ENCODE measurements at regions of chr4 and their contacts with region 1.

Region 1: DNA sequence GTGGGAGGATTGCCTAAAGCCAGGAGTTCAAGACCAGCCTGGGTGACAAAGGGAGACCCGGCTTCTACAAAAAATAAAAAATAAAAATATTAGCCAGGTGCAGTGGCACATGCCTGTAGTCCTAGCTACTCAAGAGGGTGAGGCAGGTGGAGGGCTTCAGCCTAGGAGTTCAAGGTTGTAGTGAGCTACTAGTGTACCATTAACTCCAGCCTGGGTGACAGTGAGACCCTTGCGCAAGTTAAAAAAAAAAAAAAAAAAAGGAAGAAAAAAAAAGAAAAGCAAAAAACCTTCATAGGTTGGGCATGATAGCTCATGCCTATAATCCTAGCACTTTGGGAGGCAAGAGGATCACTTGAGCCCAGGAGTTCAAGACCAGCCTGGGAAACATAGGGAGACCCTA is 5.8 kb downstream of the SCLT1 start:
- DNase-seq: no peak
- ATAC-seq: 0 out of 3 replicates have a peak, but pooled peaks have one; percentile 5
- H3K4me3 ChIP-seq: no peak overlapping the region
- H3K27ac ChIP-seq: no peak overlapping the region
- H3K4me1 ChIP-seq: no peaks in the 10 kb centered on the region
- H3K27me3 ChIP-seq: no peaks in the 10 kb centered on the region
- CTCF ChIP-seq: no peak
- EP300 ChIP-seq: no peak
- POLR2A ChIP-seq: no peak
- RAD21 ChIP-seq: no peak

Region 2: GRCh38 chr4:129056560-129056959 is 31.0 kb before region 1 on chr4:
- CTCF ChIA-PET with region 1: no interaction called
- POLR2A ChIA-PET with region 1: no interaction called
- RAD21 ChIA-PET with region 1: no interaction called
- SMC1A ChIA-PET with region 1: no interaction called
- in situ Hi-C with region 1: no loop called
- intact Hi-C with region 1: no loop called
- DNase-seq: no peak
- ATAC-seq: no peak
- H3K4me3 ChIP-seq: no peak overlapping the region
- H3K27ac ChIP-seq: no peak overlapping the region
- H3K4me1 ChIP-seq: no peaks in the 10 kb centered on the region
- H3K27me3 ChIP-seq: no peaks in the 10 kb centered on the region
- CTCF ChIP-seq: no peak
- EP300 ChIP-seq: no peak
- POLR2A ChIP-seq: no peak
- RAD21 ChIP-seq: no peak

Region 3: GRCh38 chr4:129077326-129077725 is 10.2 kb before region 1 on chr4:
- CTCF ChIA-PET with region 1: interaction called, 3 read pairs
- POLR2A ChIA-PET with region 1: interaction called, 8 read pairs
- RAD21 ChIA-PET with region 1: no interaction called
- SMC1A ChIA-PET with region 1: interaction called, 14 read pairs
- in situ Hi-C with region 1: no loop called
- intact Hi-C with region 1: no loop called
- DNase-seq: no peak
- ATAC-seq: no peak
- H3K4me3 ChIP-seq: no peak overlapping the region
- H3K27ac ChIP-seq: no peak overlapping the region
- H3K4me1 ChIP-seq: no peaks in the 10 kb centered on the region
- H3K27me3 ChIP-seq: no peaks in the 10 kb centered on the region
- CTCF ChIP-seq: no peak
- EP300 ChIP-seq: no peak
- POLR2A ChIP-seq: no peak
- RAD21 ChIP-seq: no peak

Region 4: DNA sequence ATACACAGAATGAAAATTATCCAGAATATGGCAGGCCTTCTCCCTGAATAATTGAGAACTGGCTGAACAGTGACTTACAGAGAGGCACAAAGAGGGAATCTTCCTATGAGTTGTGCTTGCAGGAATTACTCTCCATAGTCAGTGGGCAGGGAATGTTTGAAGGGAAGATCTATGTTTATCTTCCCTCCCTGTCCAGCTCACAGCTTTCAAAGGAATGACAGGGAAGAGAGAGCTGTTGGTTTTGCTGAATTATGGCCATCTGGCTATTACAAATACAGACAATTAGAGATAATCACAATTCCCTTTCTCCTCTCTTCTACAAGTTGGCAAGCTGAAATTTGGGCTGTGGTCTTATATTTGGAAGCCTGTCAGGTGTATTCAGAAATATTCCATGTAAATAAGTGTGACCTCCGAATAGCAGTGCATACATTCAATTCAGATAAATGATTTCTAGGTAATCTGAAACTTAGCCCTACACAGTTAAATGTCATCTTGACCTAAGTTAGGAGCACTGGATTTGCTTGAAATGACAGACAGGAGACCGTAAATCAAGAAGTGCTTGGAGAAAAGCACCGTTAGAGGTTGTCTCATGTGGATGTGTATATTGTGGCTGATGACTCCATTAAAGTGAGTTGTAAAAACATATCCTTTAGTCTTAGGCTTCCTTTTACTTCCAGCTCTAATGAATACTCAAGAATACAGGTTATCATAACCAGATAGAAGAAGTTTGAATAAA is 145.2 kb after region 1 on chr4:
- CTCF ChIA-PET with region 1: no interaction called
- POLR2A ChIA-PET with region 1: no interaction called
- RAD21 ChIA-PET with region 1: no interaction called
- SMC1A ChIA-PET with region 1: no interaction called
- in situ Hi-C with region 1: no loop called
- intact Hi-C with region 1: no loop called
- DNase-seq: no peak
- ATAC-seq: no peak
- H3K4me3 ChIP-seq: no peak overlapping the region
- H3K27ac ChIP-seq: no peak overlapping the region
- H3K4me1 ChIP-seq: no peaks in the 10 kb centered on the region
- H3K27me3 ChIP-seq: no peaks in the 10 kb centered on the region; a peak in 1 of 4 replicates
- CTCF ChIP-seq: no peak
- EP300 ChIP-seq: no peak
- POLR2A ChIP-seq: no peak
- RAD21 ChIP-seq: no peak